ENCODE measurements at regions of chrX and their contacts with region 1.

Region 1: DNA sequence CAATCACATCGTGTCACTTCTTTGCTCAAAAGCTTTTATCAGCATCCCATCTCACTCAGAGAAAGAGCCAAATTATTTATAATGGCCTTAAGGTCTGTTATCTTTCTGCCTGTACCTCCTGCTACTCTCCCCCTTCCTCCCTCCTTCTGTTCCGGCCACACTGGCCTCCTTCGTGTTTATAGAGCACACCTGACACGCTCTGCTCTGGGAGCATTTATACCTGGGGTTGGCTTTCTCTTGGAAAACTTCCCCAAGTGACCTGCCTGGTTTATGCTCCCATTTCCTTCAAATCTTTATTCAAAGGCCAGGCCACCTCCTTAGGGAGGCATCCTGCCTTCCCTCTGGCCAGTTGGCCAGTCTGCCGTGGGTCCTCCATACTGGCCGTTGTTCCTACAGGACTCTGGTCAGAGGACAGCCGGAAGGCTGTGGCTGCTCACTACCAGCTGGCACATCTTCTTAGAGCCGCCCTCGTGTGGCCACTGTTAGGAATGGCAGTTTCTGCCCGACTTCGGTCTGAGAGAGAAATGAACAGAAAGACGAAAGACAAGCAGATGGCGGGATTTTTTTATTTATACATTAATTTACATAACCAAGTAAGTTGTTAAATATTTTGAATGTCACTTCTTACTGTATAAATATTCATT is 80.2 kb upstream of the CBLL2 start:
- DNase-seq: peak; percentile 20
- ATAC-seq: peak; percentile 83
- H3K4me3 Mint-ChIP-seq: no peak overlapping the region
- H3K27ac Mint-ChIP-seq: no peak overlapping the region
- H3K4me1 Mint-ChIP-seq: peaks cover 16% of the 10 kb centered on the region
- H3K27me3 Mint-ChIP-seq: no peaks in the 10 kb centered on the region
- CTCF ChIP-seq: no peak

Region 2: GRCh38 chrX:21438792-21439191 is 753.7 kb before region 1 on chrX:
- CTCF ChIA-PET with region 1: no interaction called
- POLR2A ChIA-PET with region 1: no interaction called
- intact Hi-C with region 1: loop called (anchors 10 kb)
- DNase-seq: no peak
- ATAC-seq: peak; percentile 88
- H3K4me3 Mint-ChIP-seq: peak overlapping the region; percentile 76
- H3K27ac Mint-ChIP-seq: peak overlapping the region; percentile 91
- H3K4me1 Mint-ChIP-seq: peaks cover 37% of the 10 kb centered on the region
- H3K27me3 Mint-ChIP-seq: no peaks in the 10 kb centered on the region
- CTCF ChIP-seq: no peak

Region 3: DNA sequence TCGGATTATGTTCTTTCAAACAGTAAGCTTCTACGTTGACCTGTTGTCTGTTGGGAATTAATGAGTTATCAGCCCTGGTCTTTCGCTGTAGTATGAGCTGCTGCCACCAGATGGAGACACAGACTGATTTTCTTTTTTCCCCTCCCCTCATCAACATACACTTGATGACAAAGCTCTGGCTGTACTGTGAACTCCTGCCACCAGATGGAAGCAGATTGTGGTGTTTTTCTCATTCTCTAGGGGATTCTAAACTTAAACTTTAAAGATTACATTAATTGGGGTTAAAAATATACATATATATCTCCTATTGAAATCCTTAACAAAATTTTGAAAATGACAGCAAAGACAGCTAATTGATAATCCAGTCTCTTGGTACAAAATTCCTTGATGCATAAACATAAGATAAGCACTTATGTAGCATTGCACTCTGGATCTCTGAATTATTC is 207.2 kb before region 1 on chrX:
- CTCF ChIA-PET with region 1: interaction called, 18 read pairs
- POLR2A ChIA-PET with region 1: no interaction called
- intact Hi-C with region 1: loop called (anchors 1 kb)
- DNase-seq: peak; percentile 40
- ATAC-seq: peak; percentile 93
- H3K4me3 Mint-ChIP-seq: no peak overlapping the region
- H3K27ac Mint-ChIP-seq: no peak overlapping the region
- H3K4me1 Mint-ChIP-seq: peaks cover 16% of the 10 kb centered on the region
- H3K27me3 Mint-ChIP-seq: no peaks in the 10 kb centered on the region
- CTCF ChIP-seq: peak; percentile 44

Region 4: GRCh38 chrX:22063284-22063683 is 129.3 kb before region 1 on chrX:
- CTCF ChIA-PET with region 1: no interaction called
- POLR2A ChIA-PET with region 1: no interaction called
- intact Hi-C with region 1: loop called (anchors 5 kb)
- DNase-seq: peak; percentile 25
- ATAC-seq: peak; percentile 90
- H3K4me3 Mint-ChIP-seq: peak overlapping the region; percentile 41
- H3K27ac Mint-ChIP-seq: peak overlapping the region; percentile 80
- H3K4me1 Mint-ChIP-seq: peaks cover 76% of the 10 kb centered on the region
- H3K27me3 Mint-ChIP-seq: no peaks in the 10 kb centered on the region
- CTCF ChIP-seq: no peak

Region 5: GRCh38 chrX:22122510-22122909 is 70.0 kb before region 1 on chrX:
- CTCF ChIA-PET with region 1: no interaction called
- POLR2A ChIA-PET with region 1: no interaction called
- intact Hi-C with region 1: no loop called
- DNase-seq: no peak
- ATAC-seq: no peak
- H3K4me3 Mint-ChIP-seq: no peak overlapping the region
- H3K27ac Mint-ChIP-seq: no peak overlapping the region
- H3K4me1 Mint-ChIP-seq: no peaks in the 10 kb centered on the region
- H3K27me3 Mint-ChIP-seq: no peaks in the 10 kb centered on the region
- CTCF ChIP-seq: no peak

Region 6: DNA sequence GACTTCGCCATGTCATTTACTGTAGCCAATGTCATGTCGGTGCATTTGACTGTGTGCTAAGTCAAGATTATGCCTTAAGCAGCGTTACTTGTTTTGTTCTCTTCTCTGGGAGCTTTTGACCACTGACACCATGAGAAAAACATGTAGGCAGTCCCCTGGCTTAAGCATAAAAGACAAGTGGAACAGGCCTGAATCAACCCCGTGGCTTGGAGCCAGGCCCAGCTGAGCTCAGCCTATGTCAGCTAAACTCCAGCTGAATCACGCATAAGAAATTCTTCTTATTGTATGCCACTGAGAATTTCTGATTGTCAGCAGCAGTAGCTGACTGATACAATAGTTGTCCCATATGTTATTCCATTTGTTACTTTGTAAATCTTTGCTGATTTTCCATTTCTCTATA is 342.1 kb after region 1 on chrX:
- CTCF ChIA-PET with region 1: no interaction called
- POLR2A ChIA-PET with region 1: no interaction called
- intact Hi-C with region 1: loop called (anchors 2 kb)
- DNase-seq: no peak
- ATAC-seq: no peak
- H3K4me3 Mint-ChIP-seq: no peak overlapping the region
- H3K27ac Mint-ChIP-seq: no peak overlapping the region
- H3K4me1 Mint-ChIP-seq: peaks cover 3% of the 10 kb centered on the region
- H3K27me3 Mint-ChIP-seq: peaks cover 5% of the 10 kb centered on the region
- CTCF ChIP-seq: no peak